ENCODE measurements at regions of chr16 and their contacts with region 1.

Region 1: DNA sequence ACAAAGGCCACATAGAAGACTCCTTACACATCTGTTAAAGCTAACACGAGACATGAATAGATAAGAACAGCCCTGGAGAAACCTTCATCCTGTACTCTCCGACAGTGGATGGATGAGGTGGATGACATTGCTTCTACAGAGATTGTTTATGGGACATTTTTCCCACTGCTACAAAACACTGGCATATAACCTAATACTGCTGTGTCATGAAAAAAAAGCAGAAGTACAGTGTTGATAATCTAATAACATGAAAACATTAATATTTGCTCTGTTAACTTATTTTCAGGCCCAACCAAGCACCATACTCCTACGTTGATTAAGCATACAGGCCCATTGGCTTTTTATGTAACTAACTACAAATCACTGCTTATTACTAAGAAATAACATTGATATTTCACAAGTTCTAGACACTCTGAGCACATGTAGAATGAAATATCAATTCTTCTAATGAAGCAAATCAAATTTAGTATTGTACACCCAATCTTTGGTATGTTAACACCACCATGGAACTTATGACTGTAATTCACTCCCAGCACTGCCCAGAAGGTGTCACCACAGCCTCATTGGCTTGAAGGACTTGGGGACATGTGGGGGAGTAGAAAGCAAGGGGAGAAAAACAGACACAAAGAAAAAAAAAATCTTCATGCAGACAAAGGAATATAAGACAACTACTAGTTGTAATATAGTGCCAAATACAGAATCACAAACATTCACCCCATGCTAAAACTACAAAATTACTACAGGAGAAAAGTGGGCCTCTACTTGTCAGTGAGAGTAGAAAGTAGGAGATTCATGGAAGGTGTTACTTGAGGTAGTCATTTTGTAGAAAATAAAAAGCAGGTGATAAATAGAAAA is 330.0 kb upstream of the PMFBP1 start:
- DNase-seq: peak; percentile 56
- ATAC-seq: peak; percentile 93
- H3K4me3 ChIP-seq: no peak overlapping the region
- H3K27ac ChIP-seq: no peak overlapping the region
- H3K4me1 ChIP-seq: no peaks in the 10 kb centered on the region
- H3K27me3 ChIP-seq: no peaks in the 10 kb centered on the region
- CTCF ChIP-seq: peak; percentile 71 to 93 (median 85); a peak in 5 of 6 replicates
- POLR2A ChIP-seq: no peak
- RAD21 ChIP-seq: peak; percentile 93

Region 2: DNA sequence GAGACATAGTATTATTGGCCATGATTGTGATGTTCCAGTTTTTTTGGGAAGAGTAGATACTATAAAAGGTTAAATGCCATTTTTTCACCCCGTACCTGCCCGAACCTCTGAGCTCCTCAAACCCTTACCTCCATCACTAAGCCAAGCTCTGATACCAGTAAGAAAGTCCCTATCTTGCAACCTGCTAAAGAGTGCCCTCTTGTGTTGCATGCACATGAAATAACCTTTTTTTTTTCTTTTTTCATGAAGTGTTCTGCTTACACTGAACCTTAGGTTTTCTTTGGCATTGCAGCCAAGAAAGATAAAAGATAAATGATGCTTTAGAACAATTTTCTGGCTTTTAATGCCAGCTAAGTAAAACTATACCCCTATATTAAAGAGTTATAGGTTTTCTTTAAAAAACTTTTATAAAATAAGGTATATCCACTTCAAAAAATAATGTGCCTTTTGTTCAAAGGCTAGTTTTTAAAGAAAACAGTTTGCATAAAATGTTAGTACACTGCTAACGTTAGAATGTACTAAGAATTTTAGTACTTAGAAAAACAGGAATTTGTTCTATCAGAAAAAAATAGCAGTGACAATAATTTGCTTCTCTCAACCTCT is 34.7 kb before region 1 on chr16:
- CTCF ChIA-PET with region 1: no interaction called
- POLR2A ChIA-PET with region 1: no interaction called
- RAD21 ChIA-PET with region 1: no interaction called
- intact Hi-C with region 1: no loop called
- DNase-seq: peak; percentile 28
- ATAC-seq: peak; percentile 78
- H3K4me3 ChIP-seq: no peak overlapping the region
- H3K27ac ChIP-seq: no peak overlapping the region
- H3K4me1 ChIP-seq: no peaks in the 10 kb centered on the region
- H3K27me3 ChIP-seq: no peaks in the 10 kb centered on the region
- CTCF ChIP-seq: peak; percentile 58 to 74 (median 72)
- POLR2A ChIP-seq: no peak
- RAD21 ChIP-seq: peak; percentile 74

Region 3: GRCh38 chr16:72517154-72517553 is 15.2 kb after region 1 on chr16:
- CTCF ChIA-PET with region 1: no interaction called
- POLR2A ChIA-PET with region 1: no interaction called
- RAD21 ChIA-PET with region 1: no interaction called
- intact Hi-C with region 1: no loop called
- DNase-seq: no peak
- ATAC-seq: no peak
- H3K4me3 ChIP-seq: no peak overlapping the region
- H3K27ac ChIP-seq: no peak overlapping the region
- H3K4me1 ChIP-seq: no peaks in the 10 kb centered on the region
- H3K27me3 ChIP-seq: no peaks in the 10 kb centered on the region
- CTCF ChIP-seq: no peak
- POLR2A ChIP-seq: no peak
- RAD21 ChIP-seq: no peak

Region 4: GRCh38 chr16:72847187-72848027 is 345.4 kb after region 1 on chr16:
- CTCF ChIA-PET with region 1: interaction called, 5 read pairs
- POLR2A ChIA-PET with region 1: no interaction called
- RAD21 ChIA-PET with region 1: no interaction called
- intact Hi-C with region 1: loop called (anchors 2 kb)
- DNase-seq: no peak
- ATAC-seq: peak; percentile 82
- H3K4me3 ChIP-seq: no peak overlapping the region
- H3K27ac ChIP-seq: no peak overlapping the region
- H3K4me1 ChIP-seq: peaks cover 14 to 25% of the 10 kb centered on the region in 2 experiments
- H3K27me3 ChIP-seq: no peaks in the 10 kb centered on the region
- CTCF ChIP-seq: peak; percentile 47 to 65 (median 59); a peak in 5 of 6 replicates
- POLR2A ChIP-seq: no peak
- RAD21 ChIP-seq: peak; percentile 60

Region 5: DNA sequence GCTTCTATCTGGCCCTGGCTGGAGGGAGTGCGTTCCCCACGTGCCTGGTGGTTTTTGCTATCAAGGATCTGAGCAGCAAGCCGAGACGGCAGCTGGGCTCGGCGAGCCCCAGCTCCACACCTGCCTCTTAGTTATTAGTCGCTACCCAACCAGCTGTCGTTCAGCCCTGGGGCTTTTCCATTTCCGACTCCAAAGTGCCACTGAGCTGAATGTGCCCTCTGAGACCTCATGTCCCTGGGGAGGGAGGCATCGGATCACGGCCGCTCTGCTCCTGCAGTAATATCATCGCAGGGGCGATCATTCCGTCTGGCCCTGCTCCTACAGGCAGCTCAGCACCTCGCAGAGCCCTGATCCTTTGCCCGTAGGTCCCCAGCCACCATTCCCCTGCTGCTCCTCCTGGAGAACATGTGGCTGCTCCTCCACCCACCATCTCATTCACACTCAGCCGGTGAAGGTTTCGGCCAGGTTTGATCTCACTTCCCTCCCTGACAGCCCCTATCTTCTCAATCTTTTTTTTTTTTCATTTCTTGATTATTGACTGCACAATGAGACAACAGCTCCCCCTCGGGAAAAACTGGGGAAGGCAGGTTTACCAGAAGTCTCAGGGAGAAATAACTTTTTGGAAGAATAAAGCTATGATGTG is 459.3 kb after region 1 on chr16:
- CTCF ChIA-PET with region 1: interaction called, 3 read pairs
- POLR2A ChIA-PET with region 1: no interaction called
- RAD21 ChIA-PET with region 1: no interaction called
- intact Hi-C with region 1: loop called (anchors 5 kb)
- DNase-seq: no peak
- ATAC-seq: peak; percentile 52
- H3K4me3 ChIP-seq: no peak overlapping the region
- H3K27ac ChIP-seq: no peak overlapping the region
- H3K4me1 ChIP-seq: no peaks in the 10 kb centered on the region
- H3K27me3 ChIP-seq: no peaks in the 10 kb centered on the region
- CTCF ChIP-seq: peak; percentile 9 to 51 (median 29); a peak in 2 of 6 replicates
- POLR2A ChIP-seq: no peak
- RAD21 ChIP-seq: peak; percentile 46

Region 6: GRCh38 chr16:73196670-73197069 is 694.7 kb after region 1 on chr16:
- CTCF ChIA-PET with region 1: interaction called, 3 read pairs
- POLR2A ChIA-PET with region 1: no interaction called
- RAD21 ChIA-PET with region 1: no interaction called
- intact Hi-C with region 1: loop called (anchors 5 kb)
- DNase-seq: peak; percentile 54
- ATAC-seq: peak; percentile 96
- H3K4me3 ChIP-seq: no peak overlapping the region
- H3K27ac ChIP-seq: no peak overlapping the region
- H3K4me1 ChIP-seq: no peaks in the 10 kb centered on the region
- H3K27me3 ChIP-seq: no peaks in the 10 kb centered on the region; the same call in 1 of the 2 replicates
- CTCF ChIP-seq: peak; percentile 57 to 74 (median 71)
- POLR2A ChIP-seq: no peak
- RAD21 ChIP-seq: peak; percentile 88

Region 7: DNA sequence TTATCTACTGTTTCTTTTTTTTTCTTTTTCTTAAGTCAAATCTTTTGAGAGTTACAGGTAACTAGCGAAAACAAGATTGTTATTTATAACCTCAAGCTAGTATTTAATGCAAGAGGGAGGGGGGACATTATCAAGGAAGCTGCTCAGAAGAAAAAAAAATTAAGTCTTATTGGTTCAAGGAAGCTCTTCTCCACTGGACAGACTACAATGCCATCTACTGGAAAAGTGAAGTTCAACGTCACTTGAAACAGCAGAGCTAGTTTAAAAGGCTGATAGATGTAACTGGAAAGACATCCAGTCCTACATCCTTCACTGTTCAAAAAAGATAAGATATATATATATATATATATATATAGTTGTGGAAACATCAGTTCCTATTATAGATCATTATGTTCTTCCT is 1376.6 kb after region 1 on chr16:
- CTCF ChIA-PET with region 1: no interaction called
- POLR2A ChIA-PET with region 1: no interaction called
- RAD21 ChIA-PET with region 1: interaction called in 1 of 2 experiments, 6 read pairs
- intact Hi-C with region 1: loop called (anchors 5 kb)
- DNase-seq: peak; percentile 52
- ATAC-seq: peak; percentile 80
- H3K4me3 ChIP-seq: no peak overlapping the region
- H3K27ac ChIP-seq: no peak overlapping the region
- H3K4me1 ChIP-seq: no peaks in the 10 kb centered on the region
- H3K27me3 ChIP-seq: peaks cover 63% of the 10 kb centered on the region
- CTCF ChIP-seq: peak; percentile 50 to 73 (median 59); a peak in 5 of 6 replicates
- POLR2A ChIP-seq: no peak
- RAD21 ChIP-seq: peak; percentile 80

Region 8: GRCh38 chr16:73956587-73957494 is 1454.9 kb after region 1 on chr16:
- CTCF ChIA-PET with region 1: no interaction called
- POLR2A ChIA-PET with region 1: no interaction called
- RAD21 ChIA-PET with region 1: no interaction called
- intact Hi-C with region 1: loop called (anchors 10 kb)
- DNase-seq: peak; percentile 32
- ATAC-seq: peak; percentile 71
- H3K4me3 ChIP-seq: no peak overlapping the region
- H3K27ac ChIP-seq: no peak overlapping the region
- H3K4me1 ChIP-seq: no peaks in the 10 kb centered on the region
- H3K27me3 ChIP-seq: peaks cover 32% of the 10 kb centered on the region; the same call in 1 of the 2 replicates
- CTCF ChIP-seq: peak; percentile 53 to 87 (median 82); a peak in 5 of 6 replicates
- POLR2A ChIP-seq: no peak
- RAD21 ChIP-seq: peak; percentile 66